ENCODE measurements at regions of chr10 and their contacts with region 1.

Region 1: GRCh38 chr10:124916585-124917427 is 25.1 kb upstream of the ZRANB1 start:
- DNase-seq: peak; percentile 100
- ATAC-seq: peak; percentile 85 to 94 (median 92)
- H3K4me3 ChIP-seq: peak overlapping the region; percentile 81
- H3K27ac ChIP-seq: peak overlapping the region; percentile 95
- H3K4me1 ChIP-seq: peaks cover 52% of the 10 kb centered on the region
- H3K27me3 ChIP-seq: no peaks in the 10 kb centered on the region
- CTCF ChIP-seq: no peak

Region 2: GRCh38 chr10:124975977-124976514 is 59.2 kb after region 1 on chr10:
- intact Hi-C with region 1: loop called in 1 of 2 experiments (anchors 10 kb)
- DNase-seq: no peak
- ATAC-seq: peak in 1 of 4 donors; percentile 27
- H3K4me3 ChIP-seq: no peak overlapping the region
- H3K27ac ChIP-seq: no peak overlapping the region
- H3K4me1 ChIP-seq: peaks cover 16% of the 10 kb centered on the region
- H3K27me3 ChIP-seq: no peaks in the 10 kb centered on the region
- CTCF ChIP-seq: no peak

Region 3: GRCh38 chr10:125144693-125145623 is 228.2 kb after region 1 on chr10:
- intact Hi-C with region 1: loop called in 1 of 2 experiments (anchors 10 kb)
- DNase-seq: no peak
- ATAC-seq: peak in 1 of 4 donors; percentile 26
- H3K4me3 ChIP-seq: no peak overlapping the region
- H3K27ac ChIP-seq: no peak overlapping the region
- H3K4me1 ChIP-seq: peaks cover 94% of the 10 kb centered on the region
- H3K27me3 ChIP-seq: no peaks in the 10 kb centered on the region
- CTCF ChIP-seq: peak; percentile 22

Region 4: DNA sequence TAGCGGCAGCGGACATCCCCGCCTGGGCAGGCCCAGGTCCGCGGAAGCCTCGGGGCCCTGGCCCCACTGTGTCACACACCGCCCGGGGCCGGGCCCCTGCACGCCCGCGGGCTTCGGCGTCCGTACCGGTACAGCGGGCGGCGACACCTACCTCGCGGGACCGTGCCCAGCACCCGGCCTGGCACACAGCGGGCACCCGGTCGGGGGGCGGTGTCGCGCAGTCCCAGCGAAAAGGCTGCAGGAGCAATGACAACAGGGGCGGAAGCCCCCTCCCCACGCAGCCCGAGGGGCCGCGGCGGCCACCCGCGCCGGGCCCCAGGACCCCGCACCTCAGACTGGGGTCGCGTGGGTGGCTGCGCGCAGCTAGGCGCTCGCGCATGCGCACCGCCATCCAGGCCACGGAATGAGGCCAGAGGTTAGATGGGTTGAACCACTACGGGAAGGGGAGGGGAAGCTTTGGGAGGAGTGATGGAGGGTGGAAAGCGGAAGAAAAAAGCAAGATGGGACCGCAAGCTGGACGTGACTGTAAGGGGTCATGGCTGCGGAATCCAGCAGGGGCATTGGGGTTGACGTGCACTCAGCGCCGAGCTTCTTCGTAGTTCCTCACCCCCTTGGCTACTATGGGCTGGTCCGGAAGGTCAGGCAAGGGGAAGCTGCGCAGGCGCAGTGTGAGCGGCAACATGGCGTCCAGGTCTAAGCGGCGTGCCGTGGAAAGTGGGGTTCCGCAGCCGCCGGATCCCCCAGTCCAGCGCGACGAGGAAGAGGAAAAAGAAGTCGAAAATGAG is 906.3 kb after region 1 on chr10 and contains the starts of genes BCCIP and UROS:
- intact Hi-C with region 1: loop called in 1 of 2 experiments (anchors 5 kb)
- DNase-seq: peak; percentile 93 to 97
- ATAC-seq: peak; percentile 95 to 97 (median 96)
- H3K4me3 ChIP-seq: peak within 1 kb of the TSS; percentile 99
- H3K27ac ChIP-seq: peak within 1 kb of the TSS; percentile 92
- H3K4me1 ChIP-seq: peaks cover 35% of the 10 kb centered on the region
- H3K27me3 ChIP-seq: no peaks in the 10 kb centered on the region
- CTCF ChIP-seq: no peak
- total RNA-seq, gene BCCIP: 57.6 to 87.6 (median 78.2) TPM
- total RNA-seq, gene UROS: 47.5 to 73.6 (median 59.0) TPM

Measured in psoas muscle (tissue), 8 donors.